PC-9 (cell line): ENCODE measurements at regions of chrX and their contacts with region 1.

Region 1: DNA sequence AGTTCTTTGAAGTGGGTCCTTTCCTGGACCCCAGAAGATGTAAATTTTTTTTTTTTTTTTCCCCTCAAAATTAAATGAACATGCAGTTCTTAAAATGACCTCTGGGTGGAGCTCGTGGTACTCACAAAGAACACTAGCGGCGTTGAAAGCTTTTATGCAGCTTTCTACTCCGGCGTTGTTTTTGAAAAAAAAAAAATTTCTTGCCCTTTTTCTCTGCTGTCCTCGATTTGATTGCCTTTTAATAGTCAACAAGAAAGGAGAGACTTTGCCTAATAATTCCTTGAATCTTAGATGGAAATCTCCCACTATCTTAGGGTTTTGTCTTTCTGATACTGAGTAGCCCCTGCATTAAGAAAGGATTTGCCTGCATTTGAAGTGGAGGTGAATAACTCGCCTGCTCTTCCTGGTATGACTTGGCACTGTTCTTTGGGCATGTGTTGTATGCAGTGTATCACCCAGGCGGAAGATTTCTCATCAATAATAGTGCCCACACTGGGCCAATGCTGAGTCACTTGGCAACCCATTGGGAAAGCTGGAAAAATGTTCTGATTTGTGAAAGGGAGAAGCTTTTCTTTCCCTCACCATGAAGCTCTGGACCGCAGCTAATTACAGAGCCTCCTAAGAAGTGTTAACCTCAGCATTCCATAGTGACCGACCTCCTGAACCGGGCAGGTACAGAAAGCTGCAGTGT is 104.0 kb downstream of the PHEX start:
- DNase-seq: peak; percentile 63 to 93
- H3K4me3 ChIP-seq: peak overlapping the region; percentile 47; the same call in 1 of the 2 replicates
- H3K27ac ChIP-seq: peak overlapping the region; percentile 99
- H3K4me1 ChIP-seq: peaks cover 42% of the 10 kb centered on the region
- H3K27me3 ChIP-seq: no peaks in the 10 kb centered on the region
- CTCF ChIP-seq: peak; percentile 84

Region 2: GRCh38 chrX:22073918-22074317 is 62.2 kb before region 1 on chrX:
- CTCF ChIA-PET with region 1: no interaction called
- POLR2A ChIA-PET with region 1: no interaction called
- intact Hi-C with region 1: loop called (anchors 5 kb)
- DNase-seq: peak; percentile 65 to 95
- H3K4me3 ChIP-seq: no peak overlapping the region
- H3K27ac ChIP-seq: peak overlapping the region; percentile 73
- H3K4me1 ChIP-seq: peaks cover 19% of the 10 kb centered on the region
- H3K27me3 ChIP-seq: no peaks in the 10 kb centered on the region
- CTCF ChIP-seq: no peak

Region 3: DNA sequence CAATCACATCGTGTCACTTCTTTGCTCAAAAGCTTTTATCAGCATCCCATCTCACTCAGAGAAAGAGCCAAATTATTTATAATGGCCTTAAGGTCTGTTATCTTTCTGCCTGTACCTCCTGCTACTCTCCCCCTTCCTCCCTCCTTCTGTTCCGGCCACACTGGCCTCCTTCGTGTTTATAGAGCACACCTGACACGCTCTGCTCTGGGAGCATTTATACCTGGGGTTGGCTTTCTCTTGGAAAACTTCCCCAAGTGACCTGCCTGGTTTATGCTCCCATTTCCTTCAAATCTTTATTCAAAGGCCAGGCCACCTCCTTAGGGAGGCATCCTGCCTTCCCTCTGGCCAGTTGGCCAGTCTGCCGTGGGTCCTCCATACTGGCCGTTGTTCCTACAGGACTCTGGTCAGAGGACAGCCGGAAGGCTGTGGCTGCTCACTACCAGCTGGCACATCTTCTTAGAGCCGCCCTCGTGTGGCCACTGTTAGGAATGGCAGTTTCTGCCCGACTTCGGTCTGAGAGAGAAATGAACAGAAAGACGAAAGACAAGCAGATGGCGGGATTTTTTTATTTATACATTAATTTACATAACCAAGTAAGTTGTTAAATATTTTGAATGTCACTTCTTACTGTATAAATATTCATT is 56.4 kb after region 1 on chrX:
- CTCF ChIA-PET with region 1: interaction called, 3 read pairs
- POLR2A ChIA-PET with region 1: no interaction called
- intact Hi-C with region 1: loop called (anchors 1 kb)
- DNase-seq: peak in 1 of 2 experiments; percentile 43
- H3K4me3 ChIP-seq: no peak overlapping the region
- H3K27ac ChIP-seq: no peak overlapping the region
- H3K4me1 ChIP-seq: peaks cover 6% of the 10 kb centered on the region; the same call in 1 of the 2 replicates
- H3K27me3 ChIP-seq: no peaks in the 10 kb centered on the region
- CTCF ChIP-seq: peak; percentile 77

Region 4: DNA sequence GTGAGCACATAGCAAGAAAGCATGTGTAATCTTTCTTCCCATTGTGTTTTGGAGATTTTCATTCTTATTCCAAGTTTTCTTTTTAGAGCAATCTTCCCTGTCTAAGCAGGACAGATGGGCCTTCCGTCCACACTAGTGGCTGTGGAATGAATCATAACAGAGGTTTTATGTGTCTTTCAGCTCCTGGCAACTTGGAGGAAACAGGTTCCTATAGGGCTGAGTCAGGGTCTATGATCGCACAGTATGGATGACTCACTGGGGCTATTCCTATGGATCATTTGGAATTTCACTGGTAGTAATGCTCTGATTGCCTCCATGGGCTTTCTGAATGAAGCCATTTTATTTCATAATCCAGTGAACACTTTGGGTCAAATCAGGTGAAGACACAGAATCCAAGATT is 84.8 kb after region 1 on chrX:
- CTCF ChIA-PET with region 1: no interaction called
- POLR2A ChIA-PET with region 1: no interaction called
- intact Hi-C with region 1: no loop called
- DNase-seq: peak; percentile 32 to 87
- H3K4me3 ChIP-seq: no peak overlapping the region
- H3K27ac ChIP-seq: peak overlapping the region; percentile 78
- H3K4me1 ChIP-seq: peaks cover 17% of the 10 kb centered on the region
- H3K27me3 ChIP-seq: no peaks in the 10 kb centered on the region
- CTCF ChIP-seq: no peak

Region 5: DNA sequence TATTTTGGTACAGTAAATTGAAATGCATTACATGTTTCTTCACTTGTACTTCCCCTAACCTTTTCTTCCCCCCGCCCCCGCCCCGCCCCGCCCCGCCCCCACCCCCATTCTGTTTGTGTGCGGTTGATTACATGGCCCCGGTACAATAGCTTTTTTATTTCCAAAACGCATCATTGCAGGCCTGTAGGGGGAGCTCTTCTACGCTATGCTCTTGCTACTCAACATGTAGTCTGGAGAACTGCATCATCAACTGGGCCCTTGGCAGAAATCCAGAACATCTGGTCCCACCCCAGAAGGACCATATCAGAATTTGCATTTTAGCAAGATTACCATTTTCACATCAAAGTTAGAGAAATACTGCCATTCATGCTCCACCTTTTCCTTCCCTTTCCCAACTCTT is 530.3 kb after region 1 on chrX:
- CTCF ChIA-PET with region 1: no interaction called
- POLR2A ChIA-PET with region 1: interaction called, 15 read pairs
- intact Hi-C with region 1: no loop called
- DNase-seq: no peak
- H3K4me3 ChIP-seq: no peak overlapping the region
- H3K27ac ChIP-seq: no peak overlapping the region
- H3K4me1 ChIP-seq: no peaks in the 10 kb centered on the region
- H3K27me3 ChIP-seq: no peaks in the 10 kb centered on the region
- CTCF ChIP-seq: no peak; the same call in 1 of the 2 replicates

Region 6: GRCh38 chrX:23554304-23554703 is 1418.2 kb after region 1 on chrX:
- CTCF ChIA-PET with region 1: no interaction called
- POLR2A ChIA-PET with region 1: no interaction called
- intact Hi-C with region 1: loop called (anchors 2 kb)
- DNase-seq: peak in 1 of 2 experiments; percentile 40
- H3K4me3 ChIP-seq: no peak overlapping the region
- H3K27ac ChIP-seq: no peak overlapping the region
- H3K4me1 ChIP-seq: no peaks in the 10 kb centered on the region
- H3K27me3 ChIP-seq: no peaks in the 10 kb centered on the region
- CTCF ChIP-seq: peak; percentile 75